Naive thymus-derived CD4-positive, alpha-beta T cell (primary cell): ENCODE measurements at regions of chr16 and their contacts with region 1.

Region 1: DNA sequence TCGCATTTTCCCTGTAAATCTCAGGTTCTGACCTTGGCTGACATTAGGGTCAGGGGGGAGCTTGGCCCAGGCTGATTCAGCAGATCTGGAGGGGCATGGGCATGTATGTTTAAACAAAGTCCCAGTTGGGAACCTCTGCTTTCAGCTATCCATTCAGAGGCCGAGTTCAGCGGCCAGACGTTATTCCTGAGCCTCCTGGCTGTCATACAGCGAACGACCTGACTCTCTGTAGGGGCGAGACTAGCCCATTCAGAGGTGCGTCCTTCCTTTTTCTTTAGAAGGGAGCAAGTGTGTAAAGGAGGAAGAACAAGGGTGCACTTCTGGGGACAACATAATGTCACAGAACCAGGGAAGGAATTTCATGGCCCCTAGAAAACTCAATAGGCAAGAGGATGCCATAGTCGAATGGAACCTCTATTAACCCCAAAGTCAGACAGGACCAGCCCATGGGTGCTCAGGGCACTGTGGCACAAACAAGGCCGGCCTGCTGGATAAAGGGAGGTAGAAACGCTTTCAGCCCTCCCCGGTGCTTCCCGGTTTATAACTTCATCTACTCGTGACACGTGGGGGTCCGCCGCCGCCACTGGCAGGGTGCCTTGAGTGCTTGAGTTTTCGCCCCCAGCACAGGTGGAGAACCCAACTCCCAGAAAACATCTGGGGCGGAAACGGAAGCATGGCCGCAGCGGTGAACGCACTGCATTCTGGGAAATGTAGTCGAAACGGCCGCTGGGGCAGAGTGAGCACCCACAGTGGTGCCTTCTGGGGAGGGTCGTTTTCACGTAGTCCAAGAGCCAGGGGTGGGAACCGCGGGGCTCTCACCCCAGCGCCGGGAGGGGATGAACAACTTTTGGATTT is 33.2 kb upstream of the PLCG2 start:
- DNase-seq: peak; percentile 53 to 75 (median 71)
- ATAC-seq: peak; percentile 97
- H3K4me3 ChIP-seq: peak overlapping the region; percentile 66
- H3K4me3 Mint-ChIP-seq: peak overlapping the region; percentile 82 to 90 (median 86)
- H3K27ac ChIP-seq: peak overlapping the region; percentile 65
- H3K27ac Mint-ChIP-seq: peak overlapping the region; percentile 83 to 95 (median 88)
- H3K4me1 ChIP-seq: peaks cover 4 to 10% of the 10 kb centered on the region in 2 donors
- H3K4me1 Mint-ChIP-seq: peaks cover 6 to 33% (median 10%) of the 10 kb centered on the region in 7 donors
- H3K27me3 ChIP-seq: no peaks in the 10 kb centered on the region
- H3K27me3 Mint-ChIP-seq: peaks cover 0 to 6% (median 0%) of the 10 kb centered on the region in 5 donors

Region 2: DNA sequence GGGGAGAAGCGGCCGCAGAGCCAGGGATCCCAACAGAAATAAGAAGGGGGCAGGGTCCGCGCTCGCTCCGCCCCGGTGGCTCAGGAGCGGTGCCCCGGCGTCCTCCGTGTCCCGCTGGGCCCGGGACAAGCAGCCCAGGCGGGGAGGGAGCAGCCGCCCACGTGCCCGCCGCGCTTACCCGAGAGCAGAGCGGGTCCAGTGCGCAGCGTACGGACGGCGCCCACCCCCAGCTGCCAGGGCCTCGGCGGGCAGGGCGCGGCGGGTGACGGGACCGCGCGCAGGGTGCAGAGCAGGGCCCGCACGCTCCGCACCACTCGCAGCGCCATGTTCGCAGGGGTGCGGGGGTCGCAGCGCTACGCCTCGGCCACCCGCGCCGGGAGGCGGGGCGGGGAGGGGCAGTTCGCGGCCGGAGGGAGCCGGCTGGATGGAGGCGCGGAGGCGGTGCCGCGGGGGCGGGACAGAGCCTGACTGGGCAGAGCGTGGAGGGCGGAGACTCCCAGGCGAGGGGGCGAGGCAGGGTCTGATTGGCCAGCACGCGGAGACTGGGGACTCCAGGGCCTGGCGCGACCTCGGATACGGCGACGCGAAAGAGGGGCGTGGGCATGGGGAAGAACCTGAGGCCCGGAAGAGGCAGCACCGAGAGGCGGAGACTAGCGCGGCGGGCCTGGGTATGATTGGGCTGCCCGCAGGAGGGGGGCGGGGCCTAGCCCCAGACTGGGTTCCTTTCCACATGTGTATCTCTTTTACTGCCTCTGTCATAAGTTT is 649.8 kb before region 1 on chr16 and contains the start of gene GCSH:
- CTCF ChIA-PET with region 1: no interaction called
- POLR2A ChIA-PET with region 1: no interaction called
- intact Hi-C with region 1: loop called in 1 of 2 experiments (anchors 5 kb)
- DNase-seq: peak; percentile 94 to 99 (median 98)
- ATAC-seq: peak; percentile 98
- H3K4me3 ChIP-seq: peak within 1 kb of the TSS; percentile 71
- H3K4me3 Mint-ChIP-seq: peak within 1 kb of the TSS; percentile 72 to 93 (median 82)
- H3K27ac ChIP-seq: peak within 1 kb of the TSS; percentile 67
- H3K27ac Mint-ChIP-seq: peak within 1 kb of the TSS; percentile 45 to 87 (median 71)
- H3K4me1 ChIP-seq: peaks cover 0 to 6% of the 10 kb centered on the region in 2 donors
- H3K4me1 Mint-ChIP-seq: peaks cover 3 to 19% (median 9%) of the 10 kb centered on the region in 7 donors
- H3K27me3 ChIP-seq: no peaks in the 10 kb centered on the region
- H3K27me3 Mint-ChIP-seq: no peaks in the 10 kb centered on the region
- total RNA-seq, gene GCSH: 1.5 to 7.5 (median 4.9) TPM

Region 3: DNA sequence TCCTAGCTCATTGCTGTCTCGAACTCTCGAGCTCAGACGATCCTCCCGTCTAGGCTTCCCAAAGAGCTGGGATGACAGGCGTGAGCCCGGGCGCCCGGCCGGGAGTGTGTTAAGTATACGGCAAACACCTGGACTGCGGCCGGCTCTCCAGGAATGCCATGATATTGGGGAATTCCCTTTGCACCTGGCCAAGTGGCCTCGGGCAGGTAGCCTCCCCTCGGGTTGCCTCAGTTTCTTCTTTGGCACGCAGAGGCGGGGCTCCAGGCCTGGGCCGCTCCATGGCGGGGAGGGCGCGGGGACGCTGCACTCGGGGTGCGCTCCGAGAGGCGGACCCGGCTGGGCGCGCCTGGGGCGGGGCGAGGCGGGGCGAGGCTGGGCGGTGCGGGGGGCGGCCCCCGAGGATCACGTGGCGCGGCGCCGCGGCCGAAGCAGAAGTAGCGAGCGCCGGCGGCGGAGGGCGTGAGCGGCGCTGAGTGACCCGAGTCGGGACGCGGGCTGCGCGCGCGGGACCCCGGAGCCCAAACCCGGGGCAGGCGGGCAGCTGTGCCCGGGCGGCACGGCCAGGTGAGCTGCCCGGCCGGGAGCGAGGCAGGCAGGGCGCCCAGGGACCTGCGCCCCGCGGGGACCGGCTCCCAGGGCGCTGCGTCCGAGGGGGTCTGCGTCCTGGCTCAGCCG is 33.1 kb after region 1 on chr16 and contains the start of gene PLCG2:
- CTCF ChIA-PET with region 1: no interaction called
- POLR2A ChIA-PET with region 1: no interaction called
- intact Hi-C with region 1: loop called in 1 of 2 experiments (anchors 1 kb)
- DNase-seq: peak in 7 of 9 donors; percentile 11 to 87 (median 24)
- ATAC-seq: peak; percentile 97
- H3K4me3 ChIP-seq: peak within 1 kb of the TSS; percentile 37
- H3K4me3 Mint-ChIP-seq: peak within 1 kb of the TSS; percentile 72 to 92 (median 82)
- H3K27ac ChIP-seq: no peak within 1 kb of the TSS
- H3K27ac Mint-ChIP-seq: peak within 1 kb of the TSS in 1 of 9 donors; percentile 72
- H3K4me1 ChIP-seq: peaks cover 4 to 8% of the 10 kb centered on the region in 2 donors
- H3K4me1 Mint-ChIP-seq: peaks cover 0 to 23% (median 21%) of the 10 kb centered on the region in 7 donors
- H3K27me3 ChIP-seq: peaks cover 0 to 3% of the 10 kb centered on the region in 2 donors
- H3K27me3 Mint-ChIP-seq: peaks cover 33 to 63% (median 44%) of the 10 kb centered on the region in 5 donors
- total RNA-seq, gene PLCG2: 1.4 to 85.8 (median 5.9) TPM

Region 4: DNA sequence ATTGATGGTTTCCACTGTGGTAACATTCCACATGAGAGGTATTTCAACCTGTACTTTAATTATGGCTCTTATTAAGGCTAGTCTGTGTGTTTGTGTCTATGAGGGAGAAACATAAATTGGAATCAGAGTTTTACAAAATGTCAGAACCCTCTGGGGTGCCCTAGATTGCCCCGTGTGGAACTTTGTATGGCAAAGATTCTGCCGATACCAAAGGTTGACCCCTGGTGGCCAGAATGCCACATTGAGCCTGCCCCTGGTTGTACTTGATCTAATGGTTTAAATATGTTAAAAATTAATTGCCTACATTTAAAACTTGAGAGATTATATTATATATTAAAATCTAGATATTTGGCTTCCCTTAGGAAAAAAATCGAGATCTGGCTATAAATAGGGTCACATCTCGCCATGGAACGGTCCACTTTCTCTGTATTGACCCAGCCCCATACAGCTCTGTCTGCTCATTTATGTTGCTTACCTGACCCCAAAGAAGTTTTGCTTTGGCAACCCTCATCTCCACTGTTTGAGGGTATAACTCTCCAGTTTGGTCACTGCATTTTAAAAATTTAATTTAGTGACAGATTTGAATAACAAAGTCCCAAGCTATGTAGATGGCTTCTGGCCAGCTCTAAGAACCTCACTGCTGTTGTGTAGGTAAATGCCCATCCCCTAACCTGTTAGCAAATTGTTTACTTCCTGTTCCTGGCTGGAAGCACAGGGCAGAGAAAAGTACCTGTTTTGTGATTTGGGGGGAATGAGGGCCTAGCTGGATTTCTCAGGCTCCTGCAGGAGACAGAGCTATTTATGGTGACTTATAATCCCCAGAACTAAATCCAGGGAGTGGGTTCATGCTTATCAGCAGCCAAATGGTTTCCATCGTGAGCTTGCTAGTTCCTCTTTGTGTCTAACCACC is 128.2 kb after region 1 on chr16:
- CTCF ChIA-PET with region 1: no interaction called
- POLR2A ChIA-PET with region 1: no interaction called
- intact Hi-C with region 1: loop called in 1 of 2 experiments (anchors 5 kb)
- DNase-seq: peak in 5 of 9 donors; percentile 5 to 47 (median 17)
- ATAC-seq: peak; percentile 82
- H3K4me3 ChIP-seq: no peak overlapping the region
- H3K4me3 Mint-ChIP-seq: no peak overlapping the region
- H3K27ac ChIP-seq: no peak overlapping the region
- H3K27ac Mint-ChIP-seq: no peak overlapping the region
- H3K4me1 ChIP-seq: peaks cover 0 to 6% of the 10 kb centered on the region in 2 donors
- H3K4me1 Mint-ChIP-seq: peaks cover 0 to 14% (median 3%) of the 10 kb centered on the region in 7 donors
- H3K27me3 ChIP-seq: no peaks in the 10 kb centered on the region
- H3K27me3 Mint-ChIP-seq: peaks cover 0 to 6% (median 0%) of the 10 kb centered on the region in 5 donors